Natural killer cell (primary cell): ENCODE measurements at regions of chrX and their contacts with region 1.

Region 1: GRCh38 chrX:77910108-77910840 is at the start of gene ATP7A:
- DNase-seq: peak; percentile 81 to 93
- ATAC-seq: peak; percentile 92 to 97 (median 93)
- H3K4me3 ChIP-seq: peak within 1 kb of the TSS; percentile 77
- H3K4me3 Mint-ChIP-seq: peak within 1 kb of the TSS; percentile 98
- H3K27ac ChIP-seq: peak within 1 kb of the TSS; percentile 92
- H3K27ac Mint-ChIP-seq: peak within 1 kb of the TSS; percentile 95 to 98
- H3K4me1 ChIP-seq: peaks cover 7% of the 10 kb centered on the region
- H3K4me1 Mint-ChIP-seq: peaks cover 23 to 26% of the 10 kb centered on the region in 2 donors
- H3K27me3 ChIP-seq: no peaks in the 10 kb centered on the region
- H3K27me3 Mint-ChIP-seq: no peaks in the 10 kb centered on the region
- CTCF ChIP-seq: peak; percentile 42
- total RNA-seq, gene ATP7A: 18.8 to 24.3 (median 21.5) TPM

Region 2: GRCh38 chrX:77704881-77705280 is 205.4 kb before region 1 on chrX:
- intact Hi-C with region 1: no loop called
- DNase-seq: no peak
- ATAC-seq: no peak
- H3K4me3 ChIP-seq: no peak overlapping the region
- H3K4me3 Mint-ChIP-seq: no peak overlapping the region
- H3K27ac ChIP-seq: no peak overlapping the region
- H3K27ac Mint-ChIP-seq: no peak overlapping the region
- H3K4me1 ChIP-seq: peaks cover 3% of the 10 kb centered on the region
- H3K4me1 Mint-ChIP-seq: peaks cover 2 to 16% of the 10 kb centered on the region in 2 donors
- H3K27me3 ChIP-seq: no peaks in the 10 kb centered on the region
- H3K27me3 Mint-ChIP-seq: no peaks in the 10 kb centered on the region
- CTCF ChIP-seq: no peak

Region 3: GRCh38 chrX:77899081-77899828 is 11.0 kb before region 1 on chrX and contains the start of gene COX7B:
- intact Hi-C with region 1: loop called (anchors 2 kb)
- DNase-seq: peak; percentile 43 to 94
- ATAC-seq: peak; percentile 65 to 83 (median 66)
- H3K4me3 ChIP-seq: peak within 1 kb of the TSS; percentile 66
- H3K4me3 Mint-ChIP-seq: peak within 1 kb of the TSS; percentile 96
- H3K27ac ChIP-seq: peak within 1 kb of the TSS; percentile 92
- H3K27ac Mint-ChIP-seq: peak within 1 kb of the TSS; percentile 92 to 94
- H3K4me1 ChIP-seq: peaks cover 14% of the 10 kb centered on the region
- H3K4me1 Mint-ChIP-seq: peaks cover 15 to 33% of the 10 kb centered on the region in 2 donors
- H3K27me3 ChIP-seq: no peaks in the 10 kb centered on the region
- H3K27me3 Mint-ChIP-seq: no peaks in the 10 kb centered on the region
- CTCF ChIP-seq: peak; percentile 27
- total RNA-seq, gene COX7B: 133 to 168 (median 136) TPM

Region 4: DNA sequence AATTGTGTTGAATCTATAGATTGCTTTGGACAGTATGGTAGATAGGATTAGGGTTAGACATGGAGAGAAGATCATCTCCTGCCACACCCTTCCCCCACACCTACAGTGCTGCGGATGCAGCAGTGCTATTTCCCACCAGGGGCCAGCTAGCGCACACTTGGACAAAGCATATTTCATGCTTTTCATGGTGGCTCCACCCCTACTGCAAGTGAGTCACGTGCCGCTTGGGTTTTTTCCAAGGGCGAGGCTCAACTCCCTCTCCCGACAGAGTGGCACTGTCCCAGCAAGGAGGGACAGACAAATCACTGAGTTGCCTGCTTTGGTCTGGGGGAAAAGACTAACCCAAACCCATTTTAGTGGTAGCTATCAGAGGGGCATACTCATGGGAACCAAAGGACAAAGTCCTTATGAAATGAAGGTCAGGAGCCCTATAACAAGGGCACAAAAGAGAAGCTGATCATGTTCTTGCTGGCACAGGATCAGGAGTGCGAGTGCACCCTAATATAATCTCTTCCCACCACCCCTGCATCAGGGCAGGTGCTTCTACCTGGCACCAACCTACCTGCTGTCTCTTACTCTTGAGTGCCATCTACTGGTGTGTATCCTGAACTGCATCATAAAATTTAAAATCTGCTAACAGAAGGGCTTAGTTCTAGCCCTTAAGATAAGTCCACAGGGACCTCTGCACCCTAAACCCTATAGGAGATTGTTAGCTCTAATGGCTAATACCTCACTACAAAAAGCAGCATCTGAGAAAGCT is 114.3 kb after region 1 on chrX:
- intact Hi-C with region 1: loop called (anchors 1 kb)
- DNase-seq: peak in 1 of 2 donors; percentile 71
- ATAC-seq: peak; percentile 72 to 81 (median 74)
- H3K4me3 ChIP-seq: no peak overlapping the region
- H3K4me3 Mint-ChIP-seq: no peak overlapping the region
- H3K27ac ChIP-seq: no peak overlapping the region
- H3K27ac Mint-ChIP-seq: no peak overlapping the region
- H3K4me1 ChIP-seq: no peaks in the 10 kb centered on the region
- H3K4me1 Mint-ChIP-seq: peaks cover 0 to 6% of the 10 kb centered on the region in 2 donors
- H3K27me3 ChIP-seq: no peaks in the 10 kb centered on the region
- H3K27me3 Mint-ChIP-seq: no peaks in the 10 kb centered on the region
- CTCF ChIP-seq: peak; percentile 59

Region 5: DNA sequence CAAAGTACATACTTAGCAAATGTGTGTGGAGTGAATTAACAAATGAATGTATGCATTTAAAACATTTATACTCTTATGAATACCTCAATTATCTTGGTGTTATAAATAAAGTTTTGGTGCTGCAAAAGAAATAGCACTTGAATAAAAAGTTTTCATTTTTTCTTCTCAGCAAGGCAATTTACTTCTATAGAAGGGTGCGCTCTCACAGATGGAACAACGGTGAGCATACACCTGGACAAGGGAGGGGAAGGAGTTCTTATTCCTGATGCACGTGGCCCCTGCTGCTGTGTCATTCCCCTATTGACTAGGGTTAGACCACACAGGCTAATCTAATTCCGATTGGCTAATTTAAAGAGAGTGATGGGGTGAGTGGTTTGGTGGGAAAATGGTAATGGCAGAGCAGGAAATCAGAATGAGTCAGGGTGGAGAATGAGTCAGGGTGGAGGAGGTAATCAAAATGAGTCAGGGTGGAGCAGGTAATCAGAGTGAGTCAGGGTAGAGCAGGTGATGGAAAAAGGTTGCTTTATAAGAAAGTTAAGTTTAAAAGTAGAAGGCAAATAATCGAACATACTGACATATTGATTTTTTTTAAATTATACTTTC is 165.6 kb after region 1 on chrX:
- intact Hi-C with region 1: loop called (anchors 1 kb)
- DNase-seq: no peak
- ATAC-seq: no peak
- H3K4me3 ChIP-seq: no peak overlapping the region
- H3K4me3 Mint-ChIP-seq: no peak overlapping the region
- H3K27ac ChIP-seq: no peak overlapping the region
- H3K27ac Mint-ChIP-seq: no peak overlapping the region
- H3K4me1 ChIP-seq: peaks cover 12% of the 10 kb centered on the region
- H3K4me1 Mint-ChIP-seq: peaks cover 10 to 12% of the 10 kb centered on the region in 2 donors
- H3K27me3 ChIP-seq: no peaks in the 10 kb centered on the region
- H3K27me3 Mint-ChIP-seq: peaks cover 3 to 5% of the 10 kb centered on the region in 2 donors
- CTCF ChIP-seq: no peak

Region 6: GRCh38 chrX:78103623-78104446 is 193.6 kb after region 1 on chrX and contains the start of gene PGK1:
- intact Hi-C with region 1: loop called (anchors 5 kb)
- DNase-seq: peak; percentile 88 to 96
- ATAC-seq: peak; percentile 93 to 99 (median 93)
- H3K4me3 ChIP-seq: peak within 1 kb of the TSS; percentile 100
- H3K4me3 Mint-ChIP-seq: peak within 1 kb of the TSS; percentile 88
- H3K27ac ChIP-seq: peak within 1 kb of the TSS; percentile 98
- H3K27ac Mint-ChIP-seq: peak within 1 kb of the TSS; percentile 87 to 91
- H3K4me1 ChIP-seq: peaks cover 18% of the 10 kb centered on the region
- H3K4me1 Mint-ChIP-seq: peaks cover 31 to 39% of the 10 kb centered on the region in 2 donors
- H3K27me3 ChIP-seq: no peaks in the 10 kb centered on the region
- H3K27me3 Mint-ChIP-seq: no peaks in the 10 kb centered on the region
- CTCF ChIP-seq: no peak
- total RNA-seq, gene PGK1: 200 to 205 (median 203) TPM